Naive thymus-derived CD4-positive, alpha-beta T cell (primary cell): ENCODE measurements at regions of chr1 and their contacts with region 1.

Region 1: DNA sequence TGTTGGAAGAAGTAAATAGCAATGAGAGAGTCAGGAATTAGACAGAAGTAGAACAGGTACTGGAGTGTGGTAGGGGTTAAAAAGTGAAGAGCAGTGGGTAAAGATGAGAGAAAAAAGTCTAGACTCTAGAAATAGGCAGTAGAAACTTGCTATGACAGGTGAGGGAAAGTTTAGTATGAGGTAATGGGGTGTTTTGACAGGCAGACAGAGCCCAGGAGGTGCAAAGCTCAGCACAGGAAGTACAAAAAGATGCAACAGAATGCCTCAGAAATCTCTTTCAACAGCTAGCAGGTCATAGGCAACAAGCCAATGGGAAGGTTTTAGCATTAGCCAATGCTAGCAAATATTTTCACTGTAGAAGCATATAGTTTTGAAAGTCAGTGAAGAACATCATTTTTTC is 319.1 kb upstream of the SGIP1 start:
- DNase-seq: peak in 7 of 9 donors; percentile 33 to 85 (median 69)
- ATAC-seq: peak; percentile 94
- H3K4me3 ChIP-seq: no peak overlapping the region
- H3K4me3 Mint-ChIP-seq: peak overlapping the region in 5 of 10 donors; percentile 5 to 21 (median 14)
- H3K27ac ChIP-seq: peak overlapping the region; percentile 50
- H3K27ac Mint-ChIP-seq: peak overlapping the region; percentile 29 to 87 (median 49)
- H3K4me1 ChIP-seq: peaks cover 0 to 4% of the 10 kb centered on the region in 2 donors
- H3K4me1 Mint-ChIP-seq: peaks cover 5 to 18% (median 15%) of the 10 kb centered on the region in 7 donors
- H3K27me3 ChIP-seq: no peaks in the 10 kb centered on the region
- H3K27me3 Mint-ChIP-seq: peaks cover 0 to 5% (median 0%) of the 10 kb centered on the region in 5 donors

Region 2: DNA sequence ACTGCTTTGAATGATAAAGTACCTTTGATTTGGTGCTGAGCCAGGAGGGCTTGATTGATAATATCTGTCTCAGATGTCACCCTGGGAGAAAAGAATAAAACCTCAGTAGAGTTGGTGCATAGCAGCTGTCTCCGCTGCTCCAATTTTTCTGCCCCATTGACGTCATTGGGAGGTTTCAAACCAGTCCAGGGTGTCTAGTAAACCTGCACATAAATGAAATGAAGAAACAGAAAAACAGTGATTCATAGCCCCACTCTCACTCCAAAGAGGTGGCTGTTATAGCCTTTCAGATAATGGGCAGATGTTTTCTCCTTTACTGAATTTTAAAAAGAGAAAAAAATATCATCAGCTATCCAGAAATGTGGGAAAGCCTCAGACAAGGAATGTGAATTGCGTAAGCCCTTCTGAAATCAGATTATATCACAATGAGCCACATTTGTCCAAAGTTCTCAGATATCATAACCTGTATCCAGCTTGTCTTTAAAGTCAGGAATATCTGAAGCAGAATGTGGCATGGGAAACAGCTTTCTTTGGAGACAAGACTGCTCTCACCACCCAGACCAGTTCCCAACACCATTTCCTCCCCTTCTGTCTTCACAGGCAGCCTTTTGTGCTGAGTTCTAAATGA is 32.2 kb before region 1 on chr1:
- CTCF ChIA-PET with region 1: no interaction called
- POLR2A ChIA-PET with region 1: no interaction called
- intact Hi-C with region 1: loop called in 1 of 2 experiments (anchors 5 kb)
- DNase-seq: peak in 8 of 9 donors; percentile 15 to 69 (median 40)
- ATAC-seq: peak; percentile 82
- H3K4me3 ChIP-seq: no peak overlapping the region
- H3K4me3 Mint-ChIP-seq: peak overlapping the region in 5 of 10 donors; percentile 8 to 73 (median 24)
- H3K27ac ChIP-seq: no peak overlapping the region
- H3K27ac Mint-ChIP-seq: peak overlapping the region in 7 of 9 donors; percentile 7 to 81 (median 49)
- H3K4me1 ChIP-seq: peaks cover 0 to 10% of the 10 kb centered on the region in 2 donors
- H3K4me1 Mint-ChIP-seq: peaks cover 0 to 35% (median 22%) of the 10 kb centered on the region in 7 donors
- H3K27me3 ChIP-seq: no peaks in the 10 kb centered on the region
- H3K27me3 Mint-ChIP-seq: peaks cover 0 to 3% (median 0%) of the 10 kb centered on the region in 5 donors

Region 3: GRCh38 chr1:66197785-66198184 is 17.1 kb before region 1 on chr1:
- CTCF ChIA-PET with region 1: no interaction called
- POLR2A ChIA-PET with region 1: no interaction called
- intact Hi-C with region 1: no loop called
- DNase-seq: no peak
- ATAC-seq: no peak
- H3K4me3 ChIP-seq: no peak overlapping the region
- H3K4me3 Mint-ChIP-seq: no peak overlapping the region
- H3K27ac ChIP-seq: no peak overlapping the region
- H3K27ac Mint-ChIP-seq: no peak overlapping the region
- H3K4me1 ChIP-seq: no peaks in the 10 kb centered on the region
- H3K4me1 Mint-ChIP-seq: no peaks in the 10 kb centered on the region
- H3K27me3 ChIP-seq: no peaks in the 10 kb centered on the region
- H3K27me3 Mint-ChIP-seq: peaks cover 0 to 15% (median 0%) of the 10 kb centered on the region in 5 donors